ENCODE measurements at regions of chr11 and their contacts with region 1.

Region 1: DNA sequence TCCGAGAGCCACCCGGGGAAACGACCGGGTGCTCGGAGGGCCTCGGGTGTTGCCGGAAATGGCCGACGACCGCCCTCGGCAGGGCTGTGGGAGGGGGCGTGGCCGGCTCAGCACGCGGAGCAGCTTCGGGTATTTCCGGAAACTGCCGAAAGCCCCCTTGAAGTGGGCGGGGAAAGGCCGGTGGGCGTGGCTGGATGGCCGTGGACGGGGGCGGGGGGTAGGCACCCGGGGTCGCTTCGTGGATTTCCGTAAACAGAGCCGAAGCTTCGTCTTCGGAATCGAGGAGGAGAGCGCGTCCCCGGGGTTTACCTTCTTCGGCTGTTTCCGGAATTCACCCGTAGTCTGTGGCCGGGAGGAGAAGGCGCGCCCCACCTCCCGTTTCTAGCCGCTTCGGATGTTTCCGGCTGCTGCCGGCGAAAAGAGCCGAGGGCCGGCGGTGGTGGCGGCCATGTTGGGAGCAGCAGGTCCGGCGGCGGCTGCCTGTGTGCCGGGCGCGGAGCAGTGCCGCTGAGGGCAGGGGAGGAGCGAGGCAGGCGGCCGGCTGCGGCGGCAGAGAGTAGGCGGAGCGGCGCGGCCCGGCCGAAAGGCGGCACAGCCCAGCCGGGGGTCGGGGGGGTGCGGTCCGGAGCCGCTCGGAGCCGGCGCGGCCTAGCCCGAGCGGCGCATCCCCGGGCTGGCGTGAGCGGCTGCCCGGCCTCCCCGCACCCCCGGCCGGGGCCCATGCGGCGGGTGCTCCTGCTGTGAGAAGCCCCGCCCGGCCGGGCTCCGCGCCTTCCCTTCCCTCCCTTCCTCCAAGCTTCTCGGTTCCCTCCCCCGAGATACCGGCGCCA is at the start of gene MARK2:
- DNase-seq: peak; percentile 97 to 99 (median 98)
- ATAC-seq: peak; percentile 86 to 94 (median 90)
- H3K4me3 ChIP-seq: peak within 1 kb of the TSS; percentile 73 to 99 (median 87)
- H3K27ac ChIP-seq: peak within 1 kb of the TSS; percentile 70 to 95 (median 89)
- H3K4me1 ChIP-seq: peaks cover 5 to 55% (median 50%) of the 10 kb centered on the region in 12 donors
- H3K27me3 ChIP-seq: no peaks in the 10 kb centered on the region
- CTCF ChIP-seq: no peak
- POLR2A ChIP-seq: peak in 1 of 2 donors; percentile 68
- total RNA-seq, gene MARK2: 26.7 to 53.5 (median 40.8) TPM

Region 2: DNA sequence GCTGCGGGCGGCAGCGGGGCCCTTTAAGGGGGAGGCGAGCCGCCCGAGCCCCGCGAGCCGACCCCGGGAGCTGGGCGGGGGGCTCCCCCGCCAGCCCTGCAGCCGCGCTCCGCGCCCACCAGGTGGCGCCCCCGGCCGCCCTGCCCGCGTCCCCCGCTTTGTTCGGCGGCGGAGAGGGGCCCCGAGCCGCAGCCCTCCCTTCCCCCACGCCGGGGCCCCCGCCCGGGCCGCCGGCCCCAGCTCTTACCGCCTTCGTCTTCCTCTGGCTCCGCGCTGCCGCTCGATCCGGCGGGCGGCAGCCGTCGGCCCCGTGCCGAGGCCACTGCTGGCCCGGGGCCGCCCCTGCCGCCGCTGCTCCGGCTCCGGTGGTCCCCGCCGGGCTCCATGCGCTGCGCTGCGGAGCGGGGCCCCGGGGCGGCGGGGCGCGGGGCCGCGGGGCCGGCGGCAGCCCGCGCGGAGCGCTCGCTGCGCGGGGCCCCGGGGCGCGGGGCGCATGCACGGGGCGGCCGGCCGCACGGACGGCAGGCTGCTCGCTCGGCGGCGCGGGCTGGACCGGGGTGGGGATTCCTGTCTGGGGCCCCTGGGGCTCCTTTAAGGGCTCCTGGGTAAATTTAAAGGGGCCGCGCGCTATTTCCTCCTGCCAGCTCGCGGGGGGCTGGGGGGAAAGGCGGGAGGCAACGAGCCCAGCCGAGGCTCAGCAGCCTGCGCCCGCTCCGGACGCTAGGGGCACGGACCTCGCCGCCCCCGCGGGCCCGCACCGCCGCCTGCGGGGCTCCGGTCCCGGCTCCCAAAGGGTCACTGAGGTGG is 70.5 kb before region 1 on chr11 and contains the start of gene ZFTA:
- intact Hi-C with region 1: loop called in 2 of 10 experiments (anchors 2 kb)
- DNase-seq: peak; percentile 72 to 85 (median 76)
- ATAC-seq: peak in 3 of 4 donors; percentile 39 to 49 (median 44)
- H3K4me3 ChIP-seq: peak within 1 kb of the TSS; percentile 62 to 99 (median 88)
- H3K27ac ChIP-seq: peak within 1 kb of the TSS; percentile 72 to 91 (median 86)
- H3K4me1 ChIP-seq: peaks cover 0 to 39% (median 21%) of the 10 kb centered on the region in 12 donors
- H3K27me3 ChIP-seq: peaks cover 0 to 10% (median 0%) of the 10 kb centered on the region in 9 donors
- CTCF ChIP-seq: peak in 11 of 12 donors; percentile 9 to 96 (median 65)
- POLR2A ChIP-seq: no peak
- total RNA-seq, gene ZFTA: 8.1 to 17.9 (median 10.6) TPM

Region 3: GRCh38 chr11:63871962-63872799 is 33.3 kb after region 1 on chr11:
- intact Hi-C with region 1: loop called in 9 of 10 experiments (anchors 2 to 5 kb)
- DNase-seq: peak; percentile 76 to 93 (median 86)
- ATAC-seq: peak; percentile 93 to 96 (median 96)
- H3K4me3 ChIP-seq: peak overlapping the region in 5 of 12 donors; percentile 13 to 30 (median 23)
- H3K27ac ChIP-seq: peak overlapping the region; percentile 37 to 88 (median 77)
- H3K4me1 ChIP-seq: peaks cover 15 to 99% (median 69%) of the 10 kb centered on the region in 12 donors
- H3K27me3 ChIP-seq: no peaks in the 10 kb centered on the region
- CTCF ChIP-seq: peak; percentile 13 to 84 (median 50)
- POLR2A ChIP-seq: peak in 1 of 2 donors; percentile 30

Region 4: GRCh38 chr11:63879598-63880402 is 40.9 kb after region 1 on chr11:
- intact Hi-C with region 1: loop called in 7 of 10 experiments (anchors 2 to 5 kb)
- DNase-seq: no peak
- ATAC-seq: no peak
- H3K4me3 ChIP-seq: no peak overlapping the region
- H3K27ac ChIP-seq: no peak overlapping the region
- H3K4me1 ChIP-seq: peaks cover 3 to 72% (median 35%) of the 10 kb centered on the region in 12 donors
- H3K27me3 ChIP-seq: no peaks in the 10 kb centered on the region
- CTCF ChIP-seq: no peak
- POLR2A ChIP-seq: no peak

Region 5: DNA sequence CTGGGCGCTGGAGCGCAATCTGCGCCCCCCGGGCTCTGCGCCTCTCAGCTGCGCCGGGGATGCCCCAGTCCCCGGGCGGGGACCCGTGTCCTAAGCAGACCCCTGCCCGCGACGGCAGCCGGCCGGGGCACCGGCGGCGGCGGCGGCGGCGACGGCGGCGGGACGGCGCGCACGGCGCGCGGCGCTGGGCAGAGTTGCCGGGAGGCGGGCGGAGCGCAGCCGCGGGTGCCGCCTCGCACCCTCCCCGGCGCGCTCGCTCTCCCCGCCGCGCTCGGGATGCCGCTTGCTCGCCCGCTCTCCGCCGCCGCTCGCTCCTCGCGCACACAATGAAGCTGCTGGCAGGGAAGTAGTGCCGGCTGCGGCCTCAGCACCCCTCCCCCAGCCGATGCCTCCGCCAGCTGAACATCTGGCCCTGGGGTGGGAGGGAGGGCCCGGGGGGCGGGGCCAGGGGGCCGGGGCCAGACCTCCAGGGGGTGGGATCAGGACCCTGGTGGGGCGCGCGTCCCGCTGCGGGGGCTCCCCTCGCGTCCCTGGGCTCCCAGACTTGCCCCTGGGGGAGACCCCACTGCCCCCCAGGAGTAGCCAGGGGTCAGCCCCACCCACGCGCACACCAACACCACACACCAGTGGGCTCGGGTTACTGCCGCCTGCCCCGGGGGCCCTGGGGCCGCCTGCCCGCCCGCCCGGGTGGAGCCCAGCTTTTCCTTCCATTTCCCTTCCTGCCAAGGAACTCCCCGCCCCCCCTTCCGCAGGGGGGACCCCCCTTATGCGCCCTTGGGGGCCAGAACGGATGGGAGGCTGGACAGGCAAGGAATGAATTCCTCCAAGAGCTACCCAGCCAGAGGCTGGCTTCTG is 78.2 kb after region 1 on chr11 and contains the start of gene RCOR2:
- intact Hi-C with region 1: loop called in 2 of 10 experiments (anchors 2 kb)
- DNase-seq: peak; percentile 85 to 91 (median 87)
- ATAC-seq: peak in 3 of 4 donors; percentile 22 to 53 (median 38)
- H3K4me3 ChIP-seq: peak within 1 kb of the TSS; percentile 19 to 69 (median 56)
- H3K27ac ChIP-seq: peak within 1 kb of the TSS; percentile 84 to 99 (median 92)
- H3K4me1 ChIP-seq: peaks cover 7 to 62% (median 53%) of the 10 kb centered on the region in 12 donors
- H3K27me3 ChIP-seq: peaks cover 0 to 21% (median 0%) of the 10 kb centered on the region in 9 donors
- CTCF ChIP-seq: no peak
- POLR2A ChIP-seq: no peak
- total RNA-seq, gene RCOR2: 1.9 to 5.7 (median 4.2) TPM

Region 6: GRCh38 chr11:63945477-63946163 is 106.7 kb after region 1 on chr11:
- intact Hi-C with region 1: loop called (anchors 1 to 2 kb)
- DNase-seq: peak; percentile 65 to 78 (median 70)
- ATAC-seq: peak; percentile 55 to 88 (median 83)
- H3K4me3 ChIP-seq: peak overlapping the region in 10 of 12 donors; percentile 0 to 46 (median 27)
- H3K27ac ChIP-seq: peak overlapping the region; percentile 12 to 83 (median 68)
- H3K4me1 ChIP-seq: peaks cover 0 to 31% (median 22%) of the 10 kb centered on the region in 12 donors
- H3K27me3 ChIP-seq: no peaks in the 10 kb centered on the region
- CTCF ChIP-seq: peak; percentile 55 to 85 (median 75)
- POLR2A ChIP-seq: no peak

Region 7: GRCh38 chr11:64007629-64008282 is 168.9 kb after region 1 on chr11:
- intact Hi-C with region 1: no loop called
- DNase-seq: peak; percentile 74 to 92 (median 86)
- ATAC-seq: peak; percentile 78 to 90 (median 88)
- H3K4me3 ChIP-seq: peak overlapping the region; percentile 1 to 59 (median 44)
- H3K27ac ChIP-seq: peak overlapping the region in 10 of 12 donors; percentile 8 to 71 (median 52)
- H3K4me1 ChIP-seq: peaks cover 0 to 19% (median 14%) of the 10 kb centered on the region in 12 donors
- H3K27me3 ChIP-seq: peaks cover 0 to 7% (median 0%) of the 10 kb centered on the region in 9 donors
- CTCF ChIP-seq: peak in 8 of 12 donors; percentile 5 to 48 (median 20)
- POLR2A ChIP-seq: no peak

Region 8: DNA sequence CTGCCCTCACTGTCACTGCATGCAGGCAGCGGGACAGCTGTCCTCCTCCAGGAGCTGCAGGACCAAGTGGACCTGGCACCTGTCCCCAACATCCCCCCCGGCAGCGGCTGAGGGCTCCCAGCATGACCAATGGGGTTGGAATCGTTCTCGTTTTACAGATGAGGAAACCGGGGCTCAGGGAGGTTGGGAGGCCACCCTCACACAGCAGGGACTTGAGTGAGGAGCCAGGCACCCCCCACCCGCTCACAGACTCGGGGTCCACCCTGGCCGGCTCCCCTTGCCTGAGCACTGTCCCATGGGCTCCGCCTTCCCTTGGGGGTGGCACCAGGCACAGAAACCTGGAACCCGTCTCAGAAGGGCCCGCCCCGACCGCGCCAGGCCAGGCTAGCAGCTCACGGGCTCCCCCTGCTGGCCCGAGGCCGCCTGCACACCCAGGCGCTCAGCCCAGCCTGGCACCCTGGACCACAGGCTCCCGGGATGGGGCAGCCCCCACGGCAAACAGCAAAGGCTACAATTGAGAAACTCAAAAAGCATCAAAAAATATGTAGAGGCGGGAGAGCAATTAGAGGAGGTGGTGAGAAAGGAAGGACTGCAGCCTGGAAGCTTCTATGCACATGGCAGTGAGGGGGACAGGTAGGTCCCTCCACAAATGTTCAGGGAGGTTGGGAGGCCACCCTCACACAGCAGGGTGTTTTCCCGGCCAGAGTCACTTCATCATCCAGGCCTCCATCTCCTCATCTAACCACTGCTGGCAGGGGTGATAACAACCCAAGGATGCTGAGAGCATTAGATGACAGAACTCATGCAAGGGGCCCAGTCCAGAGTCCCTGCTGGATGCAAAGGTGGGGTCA is 314.2 kb after region 1 on chr11:
- intact Hi-C with region 1: loop called (anchors 1 to 5 kb)
- DNase-seq: peak; percentile 58 to 86 (median 64)
- ATAC-seq: peak; percentile 9 to 58 (median 50)
- H3K4me3 ChIP-seq: no peak overlapping the region
- H3K27ac ChIP-seq: no peak overlapping the region
- H3K4me1 ChIP-seq: peaks cover 0 to 75% (median 21%) of the 10 kb centered on the region in 12 donors
- H3K27me3 ChIP-seq: no peaks in the 10 kb centered on the region
- CTCF ChIP-seq: peak; percentile 97 to 100 (median 99)
- POLR2A ChIP-seq: no peak

Measured in heart left ventricle (tissue), 16 donors.